Caco-2 (cell line): ENCODE measurements at regions of chr2 and their contacts with region 1.

Region 1: DNA sequence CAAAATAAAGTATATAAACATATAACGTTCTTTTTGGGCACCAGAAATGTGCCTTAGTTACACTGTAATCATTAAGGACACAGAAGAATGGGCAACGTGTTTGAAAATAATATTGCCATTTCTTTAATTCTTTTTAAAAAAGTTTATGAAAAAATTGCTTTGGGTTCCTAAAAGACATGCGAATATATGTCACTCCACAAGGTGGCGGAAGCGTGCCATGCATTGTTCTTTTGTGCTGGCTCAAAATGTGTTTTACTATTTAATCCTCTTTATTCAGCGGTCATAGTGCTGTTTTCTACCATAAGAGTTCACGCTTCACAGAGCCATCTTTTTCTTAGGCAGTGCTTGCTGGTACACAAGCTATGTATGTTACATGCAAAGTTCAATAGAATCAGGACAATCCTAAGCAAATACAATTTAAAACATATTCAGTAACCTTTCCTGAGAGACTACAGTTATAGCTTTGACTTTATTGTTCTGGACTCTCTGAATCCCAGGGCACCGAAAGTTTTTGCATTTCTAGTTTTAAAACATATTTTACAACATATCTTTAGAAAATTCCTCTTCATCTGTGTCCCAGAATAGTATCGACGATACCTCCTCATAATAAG is 147.8 kb upstream of the ERBB4 start:
- DNase-seq: peak; percentile 54 to 57
- H3K4me3 ChIP-seq: no peak overlapping the region
- H3K4me3 Mint-ChIP-seq: no peak overlapping the region
- H3K27ac Mint-ChIP-seq: no peak overlapping the region
- H3K4me1 ChIP-seq: no peaks in the 10 kb centered on the region; the same call in 1 of the 2 replicates
- H3K4me1 Mint-ChIP-seq: no peaks in the 10 kb centered on the region
- H3K27me3 ChIP-seq: no peaks in the 10 kb centered on the region
- H3K27me3 Mint-ChIP-seq: peaks cover 3% of the 10 kb centered on the region
- CTCF ChIP-seq: peak; percentile 86 to 89

Region 2: GRCh38 chr2:212892193-212892592 is 205.8 kb after region 1 on chr2:
- CTCF ChIA-PET with region 1: no interaction called
- POLR2A ChIA-PET with region 1: no interaction called
- intact Hi-C with region 1: loop called (anchors 1 kb)
- DNase-seq: peak in 1 of 2 experiments; percentile 23
- H3K4me3 ChIP-seq: no peak overlapping the region
- H3K4me3 Mint-ChIP-seq: no peak overlapping the region
- H3K27ac Mint-ChIP-seq: no peak overlapping the region
- H3K4me1 ChIP-seq: no peaks in the 10 kb centered on the region
- H3K4me1 Mint-ChIP-seq: no peaks in the 10 kb centered on the region
- H3K27me3 ChIP-seq: no peaks in the 10 kb centered on the region
- H3K27me3 Mint-ChIP-seq: no peaks in the 10 kb centered on the region
- CTCF ChIP-seq: peak in 1 of 2 experiments; percentile 15

Region 3: DNA sequence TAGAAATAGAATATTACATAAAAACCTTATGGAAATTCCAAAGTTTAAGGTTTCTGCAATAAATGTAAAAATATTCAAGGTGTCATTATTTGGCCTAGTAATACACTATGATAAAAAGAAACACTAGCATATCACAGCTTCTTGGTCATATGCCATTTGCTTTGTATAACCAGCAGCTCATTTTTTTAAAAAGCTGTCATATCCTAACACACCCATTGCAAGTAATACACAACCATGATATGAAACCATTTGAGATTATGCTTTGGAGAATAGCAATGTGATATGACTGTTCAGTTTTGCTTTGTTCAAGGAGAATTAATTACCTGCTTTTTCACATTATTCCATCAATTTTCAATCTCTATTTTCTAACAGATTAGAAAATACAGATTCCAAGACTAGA is 316.0 kb after region 1 on chr2:
- CTCF ChIA-PET with region 1: no interaction called
- POLR2A ChIA-PET with region 1: no interaction called
- intact Hi-C with region 1: loop called (anchors 10 kb)
- DNase-seq: no peak
- H3K4me3 ChIP-seq: no peak overlapping the region
- H3K4me3 Mint-ChIP-seq: no peak overlapping the region
- H3K27ac Mint-ChIP-seq: no peak overlapping the region
- H3K4me1 ChIP-seq: no peaks in the 10 kb centered on the region
- H3K4me1 Mint-ChIP-seq: no peaks in the 10 kb centered on the region
- H3K27me3 ChIP-seq: no peaks in the 10 kb centered on the region
- H3K27me3 Mint-ChIP-seq: no peaks in the 10 kb centered on the region
- CTCF ChIP-seq: no peak